ENCODE measurements at regions of chr13 and their contacts with region 1.

Region 1: DNA sequence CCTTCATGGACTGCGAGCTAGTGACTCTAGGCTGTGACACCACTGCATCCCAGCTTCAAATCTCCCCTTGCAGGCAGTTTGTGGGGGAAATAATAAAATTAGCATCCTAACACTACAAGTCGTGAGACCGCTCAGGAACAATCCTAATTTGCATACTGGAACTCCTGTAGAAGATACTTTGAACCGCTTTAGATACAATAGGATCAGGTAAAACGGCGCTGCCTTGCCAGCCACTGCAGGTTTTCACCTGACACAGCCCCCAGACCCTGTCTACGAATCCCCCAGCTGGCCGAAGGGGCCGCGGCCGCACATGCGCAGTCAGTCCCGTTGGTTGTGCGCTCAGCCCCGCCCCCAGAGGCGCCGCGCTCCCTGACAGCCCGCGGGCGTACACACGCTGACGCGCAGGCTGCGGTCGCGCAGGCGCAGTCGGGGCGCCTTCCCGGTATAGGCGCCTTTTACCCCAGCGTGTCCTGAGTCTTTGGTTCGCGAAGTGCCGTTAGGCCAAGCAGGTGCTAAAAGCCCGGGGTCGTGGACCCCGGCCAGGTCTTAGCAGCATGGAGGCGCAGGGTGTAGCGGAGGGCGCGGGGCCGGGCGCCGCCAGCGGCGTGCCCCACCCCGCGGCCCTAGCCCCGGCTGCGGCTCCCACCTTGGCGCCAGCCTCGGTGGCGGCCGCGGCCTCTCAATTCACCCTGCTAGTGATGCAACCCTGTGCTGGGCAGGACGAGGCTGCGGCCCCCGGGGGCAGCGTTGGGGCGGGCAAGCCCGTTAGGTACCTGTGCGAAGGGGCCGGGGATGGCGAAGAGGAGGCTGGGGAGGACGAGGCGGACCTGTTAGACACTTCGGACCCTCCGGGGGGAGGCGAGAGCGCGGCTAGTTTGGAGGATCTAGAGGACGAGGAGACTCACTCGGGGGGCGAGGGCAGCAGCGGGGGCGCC is at the start of gene RFXAP:
- DNase-seq: peak; percentile 95
- ATAC-seq: peak; percentile 92
- H3K4me3 Mint-ChIP-seq: peak within 1 kb of the TSS; percentile 85
- H3K27ac Mint-ChIP-seq: peak within 1 kb of the TSS; percentile 90
- H3K4me1 Mint-ChIP-seq: peaks cover 45% of the 10 kb centered on the region
- H3K27me3 Mint-ChIP-seq: peaks cover 8% of the 10 kb centered on the region
- total RNA-seq, gene RFXAP: 10.1 to 13.8 TPM

Region 2: GRCh38 chr13:36346222-36347083 is 472.6 kb before region 1 on chr13 and contains the start of gene SPART:
- CTCF ChIA-PET with region 1: no interaction called
- POLR2A ChIA-PET with region 1: no interaction called
- intact Hi-C with region 1: loop called (anchors 1 to 5 kb)
- DNase-seq: peak; percentile 94
- ATAC-seq: peak; percentile 96
- H3K4me3 Mint-ChIP-seq: peak within 1 kb of the TSS; percentile 85
- H3K27ac Mint-ChIP-seq: peak within 1 kb of the TSS; percentile 85
- H3K4me1 Mint-ChIP-seq: peaks cover 29% of the 10 kb centered on the region
- H3K27me3 Mint-ChIP-seq: peaks cover 2% of the 10 kb centered on the region
- total RNA-seq, gene SPART: 30.2 to 40.4 TPM

Region 3: GRCh38 chr13:36431654-36432511 is 387.2 kb before region 1 on chr13 and contains the start of gene CCNA1:
- CTCF ChIA-PET with region 1: no interaction called
- POLR2A ChIA-PET with region 1: no interaction called
- intact Hi-C with region 1: loop called in 1 of 2 experiments (anchors 5 kb)
- DNase-seq: peak; percentile 54
- ATAC-seq: peak; percentile 73
- H3K4me3 Mint-ChIP-seq: peak within 1 kb of the TSS; percentile 24
- H3K27ac Mint-ChIP-seq: no peak within 1 kb of the TSS
- H3K4me1 Mint-ChIP-seq: peaks cover 8% of the 10 kb centered on the region
- H3K27me3 Mint-ChIP-seq: peaks cover 51% of the 10 kb centered on the region
- total RNA-seq, gene CCNA1: 0.21 to 0.40 TPM

Region 4: GRCh38 chr13:36981156-36981743 is 162.2 kb after region 1 on chr13:
- CTCF ChIA-PET with region 1: interaction called, 6 read pairs
- POLR2A ChIA-PET with region 1: no interaction called
- intact Hi-C with region 1: loop called in 1 of 2 experiments (anchors 5 kb)
- DNase-seq: no peak
- ATAC-seq: no peak
- H3K4me3 Mint-ChIP-seq: no peak overlapping the region
- H3K27ac Mint-ChIP-seq: no peak overlapping the region
- H3K4me1 Mint-ChIP-seq: no peaks in the 10 kb centered on the region
- H3K27me3 Mint-ChIP-seq: no peaks in the 10 kb centered on the region

Region 5: GRCh38 chr13:37058910-37059847 is 240.1 kb after region 1 on chr13 and contains the start of gene SUPT20H:
- CTCF ChIA-PET with region 1: no interaction called
- POLR2A ChIA-PET with region 1: no interaction called
- intact Hi-C with region 1: loop called in 1 of 2 experiments (anchors 1 kb)
- DNase-seq: peak; percentile 97
- ATAC-seq: peak; percentile 98
- H3K4me3 Mint-ChIP-seq: peak within 1 kb of the TSS; percentile 98
- H3K27ac Mint-ChIP-seq: peak within 1 kb of the TSS; percentile 88
- H3K4me1 Mint-ChIP-seq: peaks cover 32% of the 10 kb centered on the region
- H3K27me3 Mint-ChIP-seq: no peaks in the 10 kb centered on the region
- total RNA-seq, gene SUPT20H: 67.2 to 69.4 TPM

Measured in activated CD4-positive, alpha-beta T cell treated with anti-CD3 and anti-CD28 coated beads for 36 hours (primary cell).